Colonic mucosa (tissue), 4 donors: ENCODE measurements at regions of chr21 and their contacts with region 1.

Region 1: DNA sequence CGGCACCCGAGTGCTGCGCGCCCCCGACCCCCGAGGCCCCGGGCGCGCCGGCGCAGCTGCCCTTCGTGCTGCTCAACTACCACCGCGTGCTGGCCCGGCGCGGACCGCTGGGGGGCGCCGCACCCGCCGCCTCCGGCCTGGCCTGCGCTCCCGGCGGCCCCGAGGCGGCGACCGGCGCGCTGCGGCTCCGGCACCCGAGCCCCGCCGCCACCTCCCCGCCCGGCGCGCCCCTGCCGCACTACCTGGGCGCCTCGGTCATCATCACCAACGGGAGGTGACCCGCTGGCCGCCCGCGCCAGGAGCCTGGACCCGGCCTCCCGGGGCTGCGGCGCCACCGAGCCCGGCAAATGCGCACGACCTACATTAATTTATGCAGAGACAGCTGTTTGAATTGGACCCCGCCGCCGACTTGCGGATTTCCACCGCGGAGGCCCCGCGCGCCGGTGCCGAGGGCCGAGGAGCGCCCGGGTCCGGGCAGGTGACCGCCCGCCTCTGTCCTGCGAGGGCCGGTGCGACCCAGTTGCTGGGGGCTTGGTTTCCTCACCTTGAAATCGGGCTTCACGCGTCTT is 49.0 kb downstream of the SIM2 start:
- DNase-seq: peak; percentile 54
- H3K4me3 ChIP-seq: peak overlapping the region; percentile 44
- H3K27ac ChIP-seq: no peak overlapping the region
- H3K4me1 ChIP-seq: no peaks in the 10 kb centered on the region
- H3K27me3 ChIP-seq: peaks cover 8% of the 10 kb centered on the region
- CTCF ChIP-seq: no peak

Region 2: GRCh38 chr21:36504067-36505058 is 243.5 kb before region 1 on chr21:
- intact Hi-C with region 1: loop called (anchors 5 kb)
- DNase-seq: peak; percentile 48
- H3K4me3 ChIP-seq: no peak overlapping the region
- H3K27ac ChIP-seq: no peak overlapping the region
- H3K4me1 ChIP-seq: no peaks in the 10 kb centered on the region
- H3K27me3 ChIP-seq: no peaks in the 10 kb centered on the region
- CTCF ChIP-seq: peak; percentile 90

Region 3: GRCh38 chr21:36854391-36854790 is 106.5 kb after region 1 on chr21:
- intact Hi-C with region 1: loop called (anchors 10 kb)
- DNase-seq: peak; percentile 53
- H3K4me3 ChIP-seq: no peak overlapping the region
- H3K27ac ChIP-seq: no peak overlapping the region
- H3K4me1 ChIP-seq: no peaks in the 10 kb centered on the region
- H3K27me3 ChIP-seq: no peaks in the 10 kb centered on the region
- CTCF ChIP-seq: peak; percentile 52

Region 4: DNA sequence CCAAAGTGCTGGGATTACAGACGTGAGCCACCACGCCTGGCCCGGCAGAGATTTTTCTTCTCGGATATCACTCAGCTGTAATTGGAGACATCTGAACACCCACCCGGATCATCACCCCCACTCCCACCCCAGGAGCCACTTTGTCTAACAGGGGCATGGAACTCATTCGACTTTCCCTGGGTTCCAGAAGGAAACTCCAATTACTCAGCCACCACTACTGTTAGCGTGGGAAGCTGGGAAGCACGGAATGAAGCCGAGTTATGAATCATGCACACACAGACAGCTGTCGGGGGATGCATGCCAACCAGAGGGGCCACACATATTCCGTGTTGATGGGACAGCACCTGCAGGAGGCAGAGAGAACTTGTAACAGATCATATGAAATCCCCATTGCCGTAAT is 133.3 kb after region 1 on chr21:
- intact Hi-C with region 1: no loop called
- DNase-seq: no peak
- H3K4me3 ChIP-seq: no peak overlapping the region
- H3K27ac ChIP-seq: no peak overlapping the region
- H3K4me1 ChIP-seq: no peaks in the 10 kb centered on the region
- H3K27me3 ChIP-seq: no peaks in the 10 kb centered on the region
- CTCF ChIP-seq: no peak

Region 5: GRCh38 chr21:36927719-36928117 is 179.8 kb after region 1 on chr21:
- intact Hi-C with region 1: loop called (anchors 10 kb)
- DNase-seq: peak; percentile 87
- H3K4me3 ChIP-seq: no peak overlapping the region
- H3K27ac ChIP-seq: no peak overlapping the region
- H3K4me1 ChIP-seq: no peaks in the 10 kb centered on the region
- H3K27me3 ChIP-seq: no peaks in the 10 kb centered on the region
- CTCF ChIP-seq: peak; percentile 85